Dendritic cell treated with granulocyte-macrophage colony-stimulating factor and Interleukin-4, amounts not matched to agents 40 ng/mL and 50 ng/mL, for 4 days (primary cell): ENCODE measurements at regions of chr2 and their contacts with region 1.

Region 1: DNA sequence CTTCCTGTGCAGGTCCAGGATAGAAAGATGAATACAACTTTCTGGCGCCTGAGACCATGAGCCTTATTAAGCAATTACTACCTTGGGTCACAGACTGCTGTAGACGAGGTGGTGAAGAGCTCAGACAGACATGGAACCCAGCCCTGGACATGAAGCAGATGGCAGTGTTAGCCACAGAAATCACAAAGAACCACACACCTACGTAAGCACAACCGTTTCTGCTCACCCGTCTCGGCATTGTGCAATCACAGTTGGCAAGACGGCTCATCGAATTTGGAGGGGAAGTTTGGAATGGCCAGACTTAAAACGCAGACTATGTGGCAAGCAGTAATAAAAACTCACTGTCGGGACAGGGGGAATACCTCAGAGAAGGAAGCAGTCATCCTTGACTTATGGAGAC is 24.3 kb upstream of the ASPRV1 start:
- H3K4me3 Mint-ChIP-seq: no peak overlapping the region
- H3K27ac Mint-ChIP-seq: peak overlapping the region; percentile 67
- H3K4me1 Mint-ChIP-seq: peaks cover 37% of the 10 kb centered on the region
- H3K27me3 Mint-ChIP-seq: no peaks in the 10 kb centered on the region

Region 2: DNA sequence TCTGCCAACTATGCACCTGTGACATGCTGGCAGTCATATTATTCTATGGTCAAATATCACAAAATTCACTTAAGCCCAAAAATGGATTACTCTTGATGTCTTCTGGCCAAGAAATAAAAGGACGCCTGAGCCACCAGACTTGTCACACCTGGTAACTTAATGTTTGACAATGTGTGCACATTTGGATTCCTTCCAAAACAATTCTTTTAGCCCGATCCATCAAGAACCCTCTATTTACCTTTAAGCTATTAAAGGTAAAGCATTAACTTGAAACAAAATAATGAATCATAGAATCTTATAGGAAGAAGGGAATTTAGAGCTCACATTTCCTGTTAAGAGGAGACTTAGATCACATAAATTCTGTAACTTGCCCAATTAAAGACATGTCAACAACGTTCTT is 502.0 kb before region 1 on chr2:
- intact Hi-C with region 1: no loop called
- H3K4me3 Mint-ChIP-seq: no peak overlapping the region
- H3K27ac Mint-ChIP-seq: no peak overlapping the region
- H3K4me1 Mint-ChIP-seq: peaks cover 7% of the 10 kb centered on the region
- H3K27me3 Mint-ChIP-seq: no peaks in the 10 kb centered on the region

Region 3: GRCh38 chr2:69946351-69947077 is 39.2 kb before region 1 on chr2:
- intact Hi-C with region 1: loop called (anchors 5 kb)
- H3K4me3 Mint-ChIP-seq: no peak overlapping the region
- H3K27ac Mint-ChIP-seq: peak overlapping the region; percentile 88
- H3K4me1 Mint-ChIP-seq: peaks cover 70% of the 10 kb centered on the region
- H3K27me3 Mint-ChIP-seq: peaks cover 4% of the 10 kb centered on the region